ENCODE measurements at regions of chr15 and their contacts with region 1.

Region 1: DNA sequence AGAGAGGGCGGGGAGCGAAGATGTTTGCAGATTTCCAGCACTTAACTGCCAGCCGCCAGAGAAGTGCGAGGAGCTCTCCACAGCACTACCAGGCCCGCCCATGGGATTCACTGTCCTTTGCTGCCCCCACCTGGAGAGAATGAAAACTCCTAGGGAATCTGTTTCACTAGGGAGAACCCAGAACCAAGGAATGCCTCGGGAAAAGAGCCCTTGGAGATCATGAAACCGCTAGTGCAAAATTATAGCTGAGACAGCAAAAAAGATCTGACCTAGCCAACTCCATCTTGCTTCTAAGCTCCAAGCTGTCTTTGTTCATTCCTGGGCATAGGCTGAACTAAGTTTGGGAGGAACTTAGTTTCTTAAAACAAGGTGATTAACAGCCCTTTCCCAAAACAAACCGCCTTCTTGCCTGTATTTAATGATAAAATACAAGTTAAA is 82.6 kb upstream of the GCNT3 start:
- DNase-seq: peak; percentile 32
- ATAC-seq: peak; percentile 87
- H3K4me3 Mint-ChIP-seq: no peak overlapping the region
- H3K27ac Mint-ChIP-seq: peak overlapping the region; percentile 72
- H3K4me1 Mint-ChIP-seq: peaks cover 30% of the 10 kb centered on the region
- H3K27me3 Mint-ChIP-seq: no peaks in the 10 kb centered on the region
- CTCF ChIP-seq: peak; percentile 58

Region 2: GRCh38 chr15:58957101-58957973 is 571.6 kb before region 1 on chr15:
- CTCF ChIA-PET with region 1: interaction called, 19 read pairs
- POLR2A ChIA-PET with region 1: no interaction called
- intact Hi-C with region 1: loop called (anchors 1 kb)
- DNase-seq: peak; percentile 17
- ATAC-seq: peak; percentile 97
- H3K4me3 Mint-ChIP-seq: no peak overlapping the region
- H3K27ac Mint-ChIP-seq: peak overlapping the region; percentile 38
- H3K4me1 Mint-ChIP-seq: peaks cover 5% of the 10 kb centered on the region
- H3K27me3 Mint-ChIP-seq: no peaks in the 10 kb centered on the region
- CTCF ChIP-seq: no peak

Region 3: GRCh38 chr15:59020322-59020721 is 508.7 kb before region 1 on chr15:
- CTCF ChIA-PET with region 1: no interaction called
- POLR2A ChIA-PET with region 1: no interaction called
- intact Hi-C with region 1: no loop called
- DNase-seq: no peak
- ATAC-seq: no peak
- H3K4me3 Mint-ChIP-seq: no peak overlapping the region
- H3K27ac Mint-ChIP-seq: no peak overlapping the region
- H3K4me1 Mint-ChIP-seq: peaks cover 15% of the 10 kb centered on the region
- H3K27me3 Mint-ChIP-seq: no peaks in the 10 kb centered on the region
- CTCF ChIP-seq: no peak

Region 4: GRCh38 chr15:59174835-59175831 is 353.9 kb before region 1 on chr15:
- CTCF ChIA-PET with region 1: interaction called, 14 read pairs
- POLR2A ChIA-PET with region 1: interaction called, 3 read pairs
- intact Hi-C with region 1: loop called (anchors 1 kb)
- DNase-seq: no peak
- ATAC-seq: peak; percentile 99
- H3K4me3 Mint-ChIP-seq: no peak overlapping the region
- H3K27ac Mint-ChIP-seq: peak overlapping the region; percentile 20
- H3K4me1 Mint-ChIP-seq: peaks cover 15% of the 10 kb centered on the region
- H3K27me3 Mint-ChIP-seq: no peaks in the 10 kb centered on the region
- CTCF ChIP-seq: no peak

Region 5: DNA sequence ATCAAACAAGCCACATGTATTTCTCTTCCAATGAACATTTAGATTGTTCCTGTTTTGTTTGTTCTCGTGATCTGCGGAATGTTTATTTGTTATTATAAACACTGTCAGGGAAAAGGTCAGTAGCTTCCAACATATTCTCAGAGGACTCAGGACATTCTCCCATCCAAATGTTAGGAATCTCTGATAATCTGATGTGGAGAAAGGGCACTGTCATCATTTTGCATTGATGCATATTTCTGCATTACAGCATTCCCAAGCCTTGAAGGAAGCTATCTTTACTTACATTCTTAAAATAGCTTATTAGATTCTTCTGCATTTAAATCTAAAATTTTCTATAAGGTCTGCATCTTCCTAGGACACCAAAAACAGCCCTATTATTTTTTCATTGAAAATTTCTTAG is 166.7 kb before region 1 on chr15:
- CTCF ChIA-PET with region 1: no interaction called
- POLR2A ChIA-PET with region 1: no interaction called
- intact Hi-C with region 1: no loop called
- DNase-seq: no peak
- ATAC-seq: no peak
- H3K4me3 Mint-ChIP-seq: no peak overlapping the region
- H3K27ac Mint-ChIP-seq: no peak overlapping the region
- H3K4me1 Mint-ChIP-seq: peaks cover 46% of the 10 kb centered on the region
- H3K27me3 Mint-ChIP-seq: no peaks in the 10 kb centered on the region
- CTCF ChIP-seq: no peak

Region 6: DNA sequence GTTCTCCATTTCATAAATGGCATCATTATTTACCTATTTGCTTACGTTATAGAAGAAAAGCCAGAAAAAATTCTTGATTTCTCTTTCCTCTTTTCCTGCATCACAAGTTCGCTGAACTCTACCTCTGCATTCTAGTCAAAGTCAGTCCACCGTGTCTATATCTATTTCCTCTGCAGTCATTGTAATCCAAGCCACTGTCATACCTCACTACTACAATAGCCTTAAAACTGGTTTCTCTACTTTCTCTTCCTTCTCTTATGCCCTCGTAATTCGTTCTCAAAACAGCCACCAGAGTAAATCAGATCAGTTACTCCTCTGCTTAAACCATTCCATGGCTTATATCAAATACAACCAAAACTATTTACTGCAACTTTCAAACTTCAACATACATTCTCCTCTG is 104.4 kb before region 1 on chr15:
- CTCF ChIA-PET with region 1: no interaction called
- POLR2A ChIA-PET with region 1: no interaction called
- intact Hi-C with region 1: no loop called
- DNase-seq: no peak
- ATAC-seq: peak; percentile 83
- H3K4me3 Mint-ChIP-seq: no peak overlapping the region
- H3K27ac Mint-ChIP-seq: no peak overlapping the region
- H3K4me1 Mint-ChIP-seq: peaks cover 29% of the 10 kb centered on the region
- H3K27me3 Mint-ChIP-seq: no peaks in the 10 kb centered on the region
- CTCF ChIP-seq: no peak

Region 7: GRCh38 chr15:59501597-59501996 is 27.4 kb before region 1 on chr15:
- CTCF ChIA-PET with region 1: interaction called, 22 read pairs
- POLR2A ChIA-PET with region 1: no interaction called
- intact Hi-C with region 1: loop called (anchors 1 kb)
- DNase-seq: no peak
- ATAC-seq: peak; percentile 67
- H3K4me3 Mint-ChIP-seq: no peak overlapping the region
- H3K27ac Mint-ChIP-seq: no peak overlapping the region
- H3K4me1 Mint-ChIP-seq: no peaks in the 10 kb centered on the region
- H3K27me3 Mint-ChIP-seq: no peaks in the 10 kb centered on the region
- CTCF ChIP-seq: peak; percentile 24

Region 8: GRCh38 chr15:59622289-59622688 is 93.3 kb after region 1 on chr15:
- CTCF ChIA-PET with region 1: interaction called, 18 read pairs
- POLR2A ChIA-PET with region 1: no interaction called
- intact Hi-C with region 1: loop called (anchors 1 kb)
- DNase-seq: peak; percentile 20
- ATAC-seq: peak; percentile 98
- H3K4me3 Mint-ChIP-seq: no peak overlapping the region
- H3K27ac Mint-ChIP-seq: no peak overlapping the region
- H3K4me1 Mint-ChIP-seq: peaks cover 2% of the 10 kb centered on the region
- H3K27me3 Mint-ChIP-seq: peaks cover 17% of the 10 kb centered on the region
- CTCF ChIP-seq: no peak

Region 9: GRCh38 chr15:59688841-59689625 is 160.0 kb after region 1 on chr15 and contains the start of gene BNIP2:
- CTCF ChIA-PET with region 1: interaction called, 8 read pairs
- POLR2A ChIA-PET with region 1: interaction called, 3 read pairs
- intact Hi-C with region 1: loop called (anchors 5 kb)
- DNase-seq: peak; percentile 97
- ATAC-seq: peak; percentile 87
- H3K4me3 Mint-ChIP-seq: peak within 1 kb of the TSS; percentile 92
- H3K27ac Mint-ChIP-seq: peak within 1 kb of the TSS; percentile 96
- H3K4me1 Mint-ChIP-seq: peaks cover 52% of the 10 kb centered on the region
- H3K27me3 Mint-ChIP-seq: no peaks in the 10 kb centered on the region
- CTCF ChIP-seq: no peak
- total RNA-seq, gene BNIP2: 80.1 and 82.9 TPM in 2 replicates